Thyroid gland (tissue), 4 donors: ENCODE measurements at regions of chr4 and their contacts with region 1.

Region 1: GRCh38 chr4:35900286-35901243 is 343.7 kb downstream of the ARAP2 start:
- DNase-seq: no peak
- H3K4me3 ChIP-seq: no peak overlapping the region
- H3K27ac ChIP-seq: no peak overlapping the region
- H3K4me1 ChIP-seq: no peaks in the 10 kb centered on the region
- H3K27me3 ChIP-seq: no peaks in the 10 kb centered on the region
- CTCF ChIP-seq: no peak
- POLR2A ChIP-seq: no peak

Region 2: DNA sequence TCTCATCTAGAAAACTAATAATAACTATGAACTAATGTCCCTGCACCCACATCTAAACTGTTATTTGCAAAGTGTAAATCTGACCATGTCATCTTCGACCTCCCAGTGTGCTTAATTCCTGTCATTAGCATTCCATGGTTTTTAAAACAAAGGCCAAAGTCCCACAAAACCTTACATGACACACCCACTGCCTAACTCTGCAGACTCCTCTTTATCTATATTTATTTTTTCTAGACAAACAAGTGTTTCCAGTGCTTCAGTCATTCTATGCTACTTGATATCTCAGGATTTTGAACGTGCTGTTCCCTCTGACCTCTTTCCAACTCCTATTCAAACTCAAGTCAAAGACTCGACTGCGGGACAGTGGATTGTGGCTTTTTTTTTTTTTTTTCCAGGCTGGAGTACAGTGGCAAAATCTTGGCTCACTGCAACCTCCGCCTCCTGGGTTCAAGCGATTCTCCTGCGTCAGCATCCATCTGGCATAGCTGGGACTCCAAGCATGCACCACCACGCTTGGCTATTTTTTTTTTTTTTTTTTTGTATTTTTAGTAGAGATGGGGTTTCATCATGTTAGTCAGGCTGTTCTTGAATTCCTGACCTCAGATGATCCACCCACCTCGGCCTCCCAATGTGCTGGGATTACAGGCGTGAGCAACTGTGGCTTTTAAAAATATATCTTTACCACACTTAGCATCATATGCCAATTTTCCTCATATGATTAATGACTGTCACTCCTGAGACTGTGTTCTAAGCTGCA is 1167.2 kb before region 1 on chr4:
- intact Hi-C with region 1: loop called (anchors 5 kb)
- DNase-seq: no peak
- H3K4me3 ChIP-seq: no peak overlapping the region
- H3K27ac ChIP-seq: no peak overlapping the region
- H3K4me1 ChIP-seq: no peaks in the 10 kb centered on the region
- H3K27me3 ChIP-seq: no peaks in the 10 kb centered on the region
- CTCF ChIP-seq: no peak
- POLR2A ChIP-seq: no peak

Region 3: GRCh38 chr4:35760807-35761206 is 139.8 kb before region 1 on chr4:
- intact Hi-C with region 1: no loop called
- DNase-seq: no peak
- H3K4me3 ChIP-seq: no peak overlapping the region
- H3K27ac ChIP-seq: no peak overlapping the region
- H3K4me1 ChIP-seq: no peaks in the 10 kb centered on the region
- H3K27me3 ChIP-seq: no peaks in the 10 kb centered on the region
- CTCF ChIP-seq: no peak
- POLR2A ChIP-seq: no peak